T-cell (primary cell): ENCODE measurements at regions of chr2 and their contacts with region 1.

Region 1: DNA sequence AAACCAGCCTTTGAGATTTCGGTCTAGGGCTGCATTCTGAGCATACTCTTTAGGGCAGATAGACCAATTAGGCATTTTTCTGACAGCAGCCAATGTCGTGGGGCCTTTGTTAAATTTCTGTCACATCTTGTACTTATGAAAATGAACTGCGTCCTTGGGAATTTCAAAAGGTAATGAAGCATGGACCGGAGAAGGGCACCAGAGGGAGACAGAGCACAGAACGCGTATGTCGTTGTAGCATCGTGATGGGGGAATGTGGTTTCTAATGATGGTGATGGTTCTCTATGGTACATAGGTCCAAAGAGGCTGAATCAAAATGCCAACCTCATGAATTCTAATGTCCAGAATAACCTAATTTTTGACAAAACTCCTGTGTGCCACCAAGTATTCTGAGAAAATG is 483.9 kb upstream of the CRIM1 start:
- DNase-seq: no peak
- ATAC-seq: no peak
- H3K4me3 ChIP-seq: no peak overlapping the region
- H3K4me3 Mint-ChIP-seq: no peak overlapping the region
- H3K27ac ChIP-seq: no peak overlapping the region
- H3K27ac Mint-ChIP-seq: no peak overlapping the region
- H3K4me1 ChIP-seq: no peaks in the 10 kb centered on the region
- H3K4me1 Mint-ChIP-seq: no peaks in the 10 kb centered on the region
- H3K27me3 ChIP-seq: no peaks in the 10 kb centered on the region
- H3K27me3 Mint-ChIP-seq: peaks cover 5 to 8% of the 10 kb centered on the region in 2 donors

Region 2: DNA sequence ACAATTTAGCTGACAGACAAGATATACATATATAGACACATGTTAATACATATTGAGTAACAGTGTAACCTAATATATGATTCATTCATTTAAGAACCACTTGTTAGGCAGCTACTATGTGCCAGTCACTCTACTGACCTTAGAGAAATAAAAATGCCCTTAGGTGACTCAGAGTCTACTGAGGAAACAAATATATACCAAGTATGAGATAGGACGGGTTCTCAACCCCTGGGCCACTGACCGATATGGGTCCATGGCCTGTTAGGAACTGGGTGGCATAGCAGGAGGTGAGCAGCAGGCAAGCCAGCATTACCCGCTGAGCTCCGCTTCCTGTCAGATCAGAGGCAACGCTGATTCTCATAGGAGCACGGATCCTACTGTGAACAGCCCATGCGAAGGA is 1079.9 kb after region 1 on chr2:
- CTCF ChIA-PET with region 1: no interaction called
- POLR2A ChIA-PET with region 1: interaction called in 1 of 2 experiments, 12 read pairs
- DNase-seq: no peak
- ATAC-seq: no peak
- H3K4me3 ChIP-seq: no peak overlapping the region
- H3K4me3 Mint-ChIP-seq: no peak overlapping the region
- H3K27ac ChIP-seq: no peak overlapping the region
- H3K27ac Mint-ChIP-seq: peak overlapping the region in 1 of 2 donors; percentile 48
- H3K4me1 ChIP-seq: peaks cover 0 to 2% of the 10 kb centered on the region in 2 experiments
- H3K4me1 Mint-ChIP-seq: peaks cover 53 to 61% (median 58%) of the 10 kb centered on the region in 3 donors
- H3K27me3 ChIP-seq: no peaks in the 10 kb centered on the region
- H3K27me3 Mint-ChIP-seq: no peaks in the 10 kb centered on the region